IMR-90 (cell line): ENCODE measurements at regions of chr3 and their contacts with region 1.

Region 1: DNA sequence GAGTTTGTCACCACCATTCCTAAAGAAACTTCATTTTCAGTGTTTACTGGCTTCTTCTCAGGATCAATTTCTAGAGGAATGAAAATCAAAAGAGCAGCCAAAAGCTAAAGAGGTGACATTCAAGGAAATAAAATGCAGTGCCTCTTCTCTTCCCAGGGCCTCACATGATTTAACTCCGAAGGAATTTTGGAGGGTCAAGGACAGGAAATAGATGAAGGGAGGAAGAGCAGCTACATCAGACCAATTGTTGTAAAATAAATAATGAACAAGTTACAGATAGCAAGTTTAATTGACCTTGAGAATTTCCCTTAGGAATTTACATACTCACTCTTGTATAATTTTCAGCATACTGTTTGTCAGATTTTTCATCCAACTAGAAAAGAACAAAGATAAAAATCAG is 78.1 kb downstream of the LRRFIP2 start:
- DNase-seq: peak; percentile 78
- ATAC-seq: peak; percentile 78
- H3K4me3 ChIP-seq: no peak overlapping the region
- H3K27ac ChIP-seq: peak overlapping the region; percentile 11; the same call in 1 of the 2 replicates
- H3K4me1 ChIP-seq: peaks cover 3% of the 10 kb centered on the region; the same call in 1 of the 2 replicates
- H3K27me3 ChIP-seq: no peaks in the 10 kb centered on the region
- CTCF ChIP-seq: no peak
- POLR2A ChIP-seq: no peak
- RAD21 ChIP-seq: no peak

Region 2: DNA sequence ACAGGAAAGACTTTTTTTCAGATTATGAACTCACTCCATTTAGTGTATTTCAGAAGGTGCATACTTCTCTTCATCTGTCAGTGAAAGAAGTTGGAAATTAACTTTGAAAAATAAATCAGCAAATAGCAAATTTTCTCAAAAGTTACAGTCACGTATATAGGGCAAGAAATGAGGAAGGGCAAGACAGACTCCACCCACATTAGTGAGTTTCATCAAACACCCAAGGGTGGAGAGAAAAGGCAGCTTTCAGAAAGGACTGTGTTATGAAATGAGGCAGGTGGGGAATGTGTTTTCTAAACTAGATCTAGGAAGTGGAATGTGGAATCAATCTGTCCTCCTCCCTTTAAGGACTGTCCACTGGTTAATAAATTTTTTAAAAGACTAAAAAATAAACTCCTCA is 1172.2 kb after region 1 on chr3:
- CTCF ChIA-PET with region 1: interaction called, 11 read pairs
- POLR2A ChIA-PET with region 1: no interaction called
- dilution Hi-C with region 1: no loop called
- in situ Hi-C with region 1: no loop called
- intact Hi-C with region 1: no loop called
- DNase-seq: no peak
- ATAC-seq: no peak
- H3K4me3 ChIP-seq: no peak overlapping the region
- H3K27ac ChIP-seq: no peak overlapping the region
- H3K4me1 ChIP-seq: no peaks in the 10 kb centered on the region; the same call in 1 of the 2 replicates
- H3K27me3 ChIP-seq: no peaks in the 10 kb centered on the region
- CTCF ChIP-seq: no peak
- POLR2A ChIP-seq: no peak
- RAD21 ChIP-seq: no peak